Body of pancreas (tissue), 4 donors: ENCODE measurements at regions of chr21 and their contacts with region 1.

Region 1: DNA sequence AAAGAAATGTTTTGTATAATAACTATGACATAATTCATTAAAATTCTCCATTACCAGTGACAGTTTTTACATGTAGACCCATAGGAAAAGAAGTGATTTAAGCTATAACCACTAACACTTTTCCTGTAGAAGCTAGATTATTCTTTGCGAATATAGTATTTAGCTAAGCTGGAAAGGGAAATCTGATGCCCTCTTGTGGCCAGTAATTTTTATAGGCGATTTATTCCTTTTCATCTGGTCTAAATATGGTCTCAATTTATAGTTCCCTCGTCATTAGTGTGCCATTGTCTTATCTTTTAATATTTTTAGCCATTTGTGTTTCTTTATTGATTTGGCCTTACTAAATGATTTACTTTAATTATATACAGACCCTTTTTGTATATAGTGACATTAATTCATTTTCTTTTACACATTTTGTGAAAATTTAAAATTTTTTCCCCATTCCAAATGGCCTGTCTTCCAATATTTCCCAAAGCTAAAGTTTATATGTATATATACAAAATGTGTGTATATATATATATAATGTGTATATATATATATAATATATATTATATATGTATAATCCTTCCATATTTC is 26.7 kb downstream of the BTG3 start:
- DNase-seq: peak in 1 of 4 donors; percentile 28
- ATAC-seq: peak; percentile 73
- H3K4me3 ChIP-seq: no peak overlapping the region
- H3K27ac ChIP-seq: no peak overlapping the region
- H3K4me1 ChIP-seq: no peaks in the 10 kb centered on the region
- H3K27me3 ChIP-seq: no peaks in the 10 kb centered on the region
- CTCF ChIP-seq: peak; percentile 34 to 73 (median 71)
- POLR2A ChIP-seq: no peak

Region 2: DNA sequence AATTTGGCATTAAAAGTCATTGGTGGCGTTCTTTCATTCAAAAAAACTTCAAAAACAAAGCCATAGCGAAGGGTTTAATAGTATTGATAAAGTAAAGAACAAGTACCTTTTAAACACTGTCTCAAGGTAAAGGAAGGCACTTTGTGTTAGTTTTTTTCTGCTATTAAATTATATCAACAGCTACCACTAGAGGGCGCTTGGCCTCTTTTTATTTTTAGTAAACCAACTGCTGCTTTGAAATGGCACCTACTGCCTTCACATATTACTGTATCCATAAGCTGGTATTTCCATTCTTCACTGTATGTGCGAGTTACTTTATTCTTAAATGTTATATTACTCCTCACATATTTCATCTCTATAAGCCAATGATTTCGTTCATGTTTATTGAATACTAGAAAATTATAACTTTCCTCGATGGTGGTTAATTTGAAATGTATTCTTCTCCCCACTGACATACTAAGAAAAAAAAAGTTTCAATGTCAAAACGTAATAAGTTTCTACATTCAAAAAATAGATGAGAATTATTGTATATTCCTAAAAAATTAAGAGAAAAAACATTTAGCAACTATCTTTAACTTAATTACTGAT is 198.8 kb before region 1 on chr21:
- intact Hi-C with region 1: loop called (anchors 5 kb)
- DNase-seq: peak; percentile 57 to 67 (median 61)
- ATAC-seq: peak; percentile 66
- H3K4me3 ChIP-seq: no peak overlapping the region
- H3K27ac ChIP-seq: no peak overlapping the region
- H3K4me1 ChIP-seq: no peaks in the 10 kb centered on the region
- H3K27me3 ChIP-seq: no peaks in the 10 kb centered on the region
- CTCF ChIP-seq: peak; percentile 70 to 88 (median 78)
- POLR2A ChIP-seq: no peak